A549 (cell line): ENCODE measurements at regions of chr1 and their contacts with region 1.

Region 1: DNA sequence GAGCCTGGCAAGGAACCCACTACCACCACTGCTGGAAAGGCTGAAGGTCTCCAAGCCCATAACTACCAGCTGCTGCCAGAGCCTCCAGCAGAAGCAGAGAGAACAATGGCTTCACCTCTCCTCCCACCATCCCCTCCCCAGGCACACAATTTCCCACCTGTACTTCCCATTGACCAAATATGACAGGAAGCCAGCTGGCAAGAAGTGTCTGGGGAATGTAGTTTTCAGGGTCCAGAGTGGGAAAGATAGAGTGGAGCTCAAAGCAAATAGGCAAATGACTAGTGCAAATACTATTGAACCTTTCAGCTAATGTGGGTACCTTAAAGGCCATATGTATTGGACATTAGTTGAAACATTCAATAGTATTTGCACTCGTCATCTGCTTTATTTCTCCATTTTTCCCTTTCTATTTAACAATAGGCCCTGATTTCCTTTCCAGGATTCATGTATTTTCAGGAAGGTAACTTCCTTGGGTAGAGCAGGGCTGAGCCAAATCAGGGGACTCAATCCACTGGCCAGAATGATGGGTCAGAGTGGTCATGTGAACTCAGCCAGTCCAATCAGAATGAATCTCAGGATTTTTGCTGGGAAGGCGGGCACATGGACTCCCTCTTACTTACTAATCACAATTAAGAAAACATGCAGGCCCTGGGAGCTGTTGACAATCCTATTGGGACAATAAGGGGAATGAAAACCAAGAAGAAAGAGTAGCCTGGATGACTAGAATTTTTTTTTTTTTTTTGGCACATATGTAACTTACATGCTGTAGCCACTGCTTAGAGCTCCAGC is 12.1 kb upstream of the NFYC start:
- DNase-seq: no peak
- ATAC-seq: no peak
- H3K4me3 ChIP-seq: no peak overlapping the region
- H3K27ac ChIP-seq: no peak overlapping the region
- H3K4me1 ChIP-seq: no peaks in the 10 kb centered on the region
- CTCF ChIP-seq: no peak
- EP300 ChIP-seq: no peak
- POLR2A ChIP-seq: no peak
- RAD21 ChIP-seq: no peak

Region 2: DNA sequence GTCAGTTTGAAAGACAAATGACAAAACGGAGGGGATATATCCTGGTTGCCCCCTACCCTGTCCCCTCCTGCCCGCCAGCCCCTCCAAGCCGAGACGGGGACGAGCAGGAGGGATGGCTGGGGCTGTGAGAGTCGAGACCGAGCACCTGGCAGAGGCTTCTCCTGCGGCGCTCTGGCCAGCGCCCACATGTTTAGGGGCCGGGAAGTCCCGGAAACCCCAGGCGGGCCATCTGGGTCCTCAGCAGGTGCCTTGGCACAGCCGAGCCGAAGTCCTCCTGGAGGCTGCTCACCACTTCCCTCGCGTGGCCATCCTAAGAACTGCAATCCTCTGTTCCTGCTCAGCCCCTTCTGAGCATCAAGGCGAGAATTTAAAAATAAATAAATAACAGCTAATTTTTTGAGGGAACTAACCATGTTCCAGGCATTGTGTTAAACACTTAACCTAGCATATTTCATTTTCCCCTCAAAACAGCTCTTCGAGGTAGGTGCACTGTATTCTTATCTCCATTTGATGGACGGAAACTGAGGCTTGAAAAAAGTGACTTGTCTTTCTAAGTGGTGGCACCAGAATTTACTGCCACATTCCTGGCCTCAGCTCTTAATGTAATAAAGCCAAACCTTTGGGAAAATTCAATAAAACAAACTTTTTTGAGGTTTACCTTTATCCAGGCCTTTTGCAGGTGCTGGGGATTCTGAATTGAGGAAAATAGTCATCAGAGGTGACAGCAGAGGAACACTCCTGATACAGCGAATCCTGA is 10.4 kb before region 1 on chr1:
- CTCF ChIA-PET with region 1: interaction called, 10 read pairs
- POLR2A ChIA-PET with region 1: interaction called, 3 read pairs
- DNase-seq: peak; percentile 60 to 65
- ATAC-seq: peak; percentile 54 to 78; a peak in 3 of 6 replicates
- H3K4me3 ChIP-seq: peak overlapping the region; percentile 32; the same call in 1 of the 3 replicates
- H3K27ac ChIP-seq: peak overlapping the region in 1 of 2 experiments; percentile 62; a peak in 1 of 6 replicates
- H3K4me1 ChIP-seq: peaks cover 5% of the 10 kb centered on the region; the same call in 2 of the 3 replicates
- CTCF ChIP-seq: peak; percentile 57
- EP300 ChIP-seq: no peak
- POLR2A ChIP-seq: no peak
- RAD21 ChIP-seq: peak; percentile 47 to 50